Right ventricle myocardium inferior (tissue), 1 donor: ENCODE measurements at regions of chr2 and their contacts with region 1.

Region 1: GRCh38 chr2:134402410-134402809 is 148.5 kb downstream of the MGAT5 start:
- DNase-seq: no peak
- ATAC-seq: peak; percentile 84

Region 2: GRCh38 chr2:133139847-133140533 is 1262.4 kb before region 1 on chr2:
- intact Hi-C with region 1: no loop called
- DNase-seq: no peak
- ATAC-seq: no peak

Region 3: DNA sequence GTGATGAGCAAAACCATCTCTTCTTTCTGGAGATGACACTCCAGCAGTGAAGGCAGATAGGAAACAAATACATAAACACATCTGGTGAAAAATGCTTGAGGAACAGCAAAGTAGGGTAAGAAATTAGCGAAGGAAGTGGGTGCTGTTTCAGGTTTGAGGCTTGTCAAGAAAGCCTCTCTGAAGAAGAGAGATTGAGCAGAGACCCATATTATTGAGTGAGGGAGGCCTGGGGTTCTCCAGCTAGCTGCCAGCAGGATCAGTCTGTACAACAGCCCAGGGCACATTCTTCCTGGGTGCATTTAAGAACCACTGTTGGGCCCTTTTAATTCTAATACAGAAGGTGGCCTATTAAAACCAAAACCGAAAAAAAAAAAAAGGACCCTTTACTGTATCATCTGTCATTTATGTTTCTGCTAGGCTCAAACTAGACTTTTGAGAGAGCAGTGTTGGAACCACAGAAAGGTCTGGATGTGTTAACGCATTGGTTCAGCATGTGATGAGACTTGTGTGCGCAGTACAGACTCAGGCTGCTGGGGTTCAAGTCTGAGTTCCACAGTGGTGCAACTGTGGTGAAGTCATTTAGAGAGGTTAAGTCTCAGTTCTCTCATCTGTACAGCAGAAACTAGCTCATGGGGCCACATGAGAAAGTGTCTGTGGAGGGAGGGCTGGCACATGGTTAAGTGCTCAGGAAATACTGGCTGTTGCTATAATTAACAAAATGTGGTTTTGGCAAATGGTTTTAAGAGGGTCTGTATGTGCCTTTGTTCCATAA is 119.6 kb before region 1 on chr2:
- intact Hi-C with region 1: loop called (anchors 5 kb)
- DNase-seq: no peak
- ATAC-seq: peak; percentile 33

Region 4: GRCh38 chr2:134310107-134311079 is 92.0 kb before region 1 on chr2:
- intact Hi-C with region 1: loop called (anchors 10 kb)
- DNase-seq: no peak
- ATAC-seq: no peak

Region 5: GRCh38 chr2:134594399-134594798 is 192.0 kb after region 1 on chr2:
- intact Hi-C with region 1: no loop called
- DNase-seq: no peak
- ATAC-seq: no peak